Lower leg skin (tissue), 4 donors: ENCODE measurements at regions of chr11 and their contacts with region 1.

Region 1: GRCh38 chr11:16605894-16606783 is 132.3 kb upstream of the C11orf58 start:
- DNase-seq: peak; percentile 92 to 98
- H3K4me3 ChIP-seq: peak overlapping the region; percentile 34
- CTCF ChIP-seq: peak in 2 of 3 donors; percentile 73 to 83
- POLR2A ChIP-seq: no peak

Region 2: DNA sequence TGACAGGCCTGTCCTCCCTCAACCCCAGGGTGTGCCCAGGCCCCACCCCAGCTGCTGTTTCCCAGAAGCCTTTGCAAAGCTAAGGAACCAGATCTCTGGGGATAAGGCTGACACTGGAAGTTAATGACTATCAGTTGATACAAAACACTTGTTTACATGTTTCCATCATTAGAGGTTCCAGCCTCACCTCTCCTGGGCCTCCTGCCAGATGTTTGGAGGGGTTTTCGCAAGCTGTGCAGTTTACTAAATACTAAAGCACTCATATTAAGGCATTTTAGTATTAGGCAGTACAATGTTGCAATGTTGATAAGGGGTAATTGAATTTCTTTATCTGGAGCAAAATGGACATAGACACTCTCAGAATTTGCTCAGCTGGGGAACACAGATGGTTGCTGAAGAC is 1272.7 kb before region 1 on chr11:
- intact Hi-C with region 1: loop called (anchors 5 kb)
- DNase-seq: no peak
- H3K4me3 ChIP-seq: no peak overlapping the region
- CTCF ChIP-seq: no peak
- POLR2A ChIP-seq: no peak

Region 3: GRCh38 chr11:16543642-16544041 is 62.5 kb before region 1 on chr11:
- intact Hi-C with region 1: no loop called
- DNase-seq: no peak
- H3K4me3 ChIP-seq: no peak overlapping the region
- CTCF ChIP-seq: no peak
- POLR2A ChIP-seq: no peak

Region 4: DNA sequence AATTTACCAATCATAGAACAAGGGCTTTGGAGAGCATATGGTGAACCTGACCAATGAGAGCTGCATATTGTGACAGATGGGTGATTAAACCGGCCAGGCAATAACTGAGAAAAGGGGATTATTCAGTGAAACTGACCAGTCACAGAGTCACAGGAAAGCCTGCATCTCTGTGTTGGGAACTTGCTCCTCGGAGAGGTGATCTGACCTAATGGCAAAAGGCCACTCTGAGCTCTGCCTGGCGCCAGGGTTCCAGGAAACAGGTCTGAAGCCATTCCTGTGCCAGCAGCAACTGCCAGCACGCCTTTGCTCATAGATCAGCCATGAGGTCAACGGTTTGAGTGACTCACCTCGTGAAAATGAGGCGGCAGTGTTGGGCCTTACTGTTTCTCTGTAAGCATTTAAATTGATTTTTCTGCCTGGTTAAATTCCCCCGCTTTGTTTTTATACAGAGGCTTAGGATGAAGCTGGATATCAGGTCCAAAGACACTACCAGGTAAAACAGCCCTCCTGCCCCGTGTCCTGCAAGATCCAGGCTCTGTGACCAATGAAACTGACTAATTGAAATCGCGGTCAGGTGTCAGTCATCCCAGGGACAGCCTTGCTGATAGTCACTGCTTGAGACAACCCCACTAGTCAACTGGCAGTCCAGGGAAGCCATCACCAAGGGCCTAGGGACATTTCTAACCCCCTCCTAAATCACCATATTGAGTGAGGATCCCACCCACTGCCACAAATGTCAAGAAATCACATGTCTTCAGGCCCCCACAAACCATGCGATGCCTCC is 1077.4 kb after region 1 on chr11:
- intact Hi-C with region 1: no loop called
- DNase-seq: no peak
- H3K4me3 ChIP-seq: no peak overlapping the region
- CTCF ChIP-seq: no peak
- POLR2A ChIP-seq: no peak